ENCODE measurements at regions of chr2 and their contacts with region 1.

Region 1: DNA sequence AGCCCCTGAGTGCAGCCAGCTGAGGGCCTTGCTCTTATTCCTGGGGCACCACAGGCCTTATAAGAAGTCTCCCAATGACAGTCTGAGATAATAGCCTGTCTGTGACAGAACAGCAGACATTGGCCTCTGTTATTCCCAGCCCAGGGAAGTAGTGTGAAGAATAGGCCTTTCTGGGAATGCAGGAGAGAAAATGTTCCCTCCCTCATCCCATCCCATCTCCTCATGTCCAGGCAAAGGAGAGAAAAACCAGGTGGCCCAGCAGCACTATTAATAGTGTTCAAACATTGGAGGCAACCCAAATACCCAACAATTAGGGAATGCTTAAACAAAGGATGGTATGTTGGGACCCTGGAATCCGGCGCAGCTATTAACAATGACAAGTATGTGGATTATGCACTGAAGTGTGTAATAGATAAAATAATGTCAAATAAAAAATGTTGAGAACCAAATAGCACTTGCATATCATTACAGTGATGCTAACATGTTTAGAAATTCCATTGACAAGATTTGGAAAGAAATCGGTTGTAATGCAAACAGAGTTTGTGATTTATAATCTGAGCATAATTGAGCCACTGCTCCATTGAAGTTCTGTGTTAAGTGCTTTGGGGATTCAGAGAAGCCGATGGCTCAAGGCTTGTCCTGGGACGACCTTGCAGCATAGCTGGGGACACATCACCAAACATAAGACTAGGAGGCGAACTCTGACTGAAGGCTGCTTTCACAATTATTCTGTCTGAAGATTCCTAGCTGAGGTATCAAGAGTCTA is 69.3 kb downstream of the LBH start:
- DNase-seq: peak; percentile 96
- H3K4me3 ChIP-seq: no peak overlapping the region
- H3K27ac ChIP-seq: peak overlapping the region; percentile 99
- H3K27me3 ChIP-seq: no peaks in the 10 kb centered on the region
- CTCF ChIP-seq: no peak

Region 2: GRCh38 chr2:30252723-30253701 is 47.6 kb before region 1 on chr2:
- CTCF ChIA-PET with region 1: no interaction called
- POLR2A ChIA-PET with region 1: interaction called, 12 read pairs
- DNase-seq: peak; percentile 41
- H3K4me3 ChIP-seq: no peak overlapping the region
- H3K27ac ChIP-seq: peak overlapping the region; percentile 47
- H3K27me3 ChIP-seq: no peaks in the 10 kb centered on the region
- CTCF ChIP-seq: no peak

Region 3: DNA sequence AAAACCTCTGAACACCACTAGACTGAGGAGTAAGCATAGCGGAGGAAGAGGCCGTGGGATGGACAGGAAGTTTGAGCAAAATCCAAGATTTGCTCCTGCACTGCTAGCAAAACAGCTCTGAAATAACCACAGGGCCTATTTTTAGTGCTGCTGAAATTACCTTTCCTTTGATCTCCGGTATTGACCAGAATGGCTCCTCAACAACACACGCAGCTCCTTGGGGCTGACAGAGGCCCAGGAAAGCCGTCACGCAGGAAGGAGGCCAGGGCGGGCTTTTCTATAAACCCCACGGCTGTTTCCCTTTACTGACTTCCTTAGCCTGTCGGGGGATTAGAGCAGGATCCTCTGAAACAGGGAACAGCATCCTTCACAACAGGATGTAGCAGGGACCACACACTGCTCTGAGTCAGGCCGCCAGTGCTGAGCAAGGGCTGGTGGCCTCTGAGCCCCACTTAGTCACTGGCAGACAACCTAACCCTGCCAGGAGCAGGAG is 65.6 kb after region 1 on chr2:
- CTCF ChIA-PET with region 1: no interaction called
- POLR2A ChIA-PET with region 1: interaction called, 19 read pairs
- DNase-seq: no peak
- H3K4me3 ChIP-seq: no peak overlapping the region
- H3K27ac ChIP-seq: peak overlapping the region; percentile 77
- H3K27me3 ChIP-seq: no peaks in the 10 kb centered on the region
- CTCF ChIP-seq: no peak

Region 4: DNA sequence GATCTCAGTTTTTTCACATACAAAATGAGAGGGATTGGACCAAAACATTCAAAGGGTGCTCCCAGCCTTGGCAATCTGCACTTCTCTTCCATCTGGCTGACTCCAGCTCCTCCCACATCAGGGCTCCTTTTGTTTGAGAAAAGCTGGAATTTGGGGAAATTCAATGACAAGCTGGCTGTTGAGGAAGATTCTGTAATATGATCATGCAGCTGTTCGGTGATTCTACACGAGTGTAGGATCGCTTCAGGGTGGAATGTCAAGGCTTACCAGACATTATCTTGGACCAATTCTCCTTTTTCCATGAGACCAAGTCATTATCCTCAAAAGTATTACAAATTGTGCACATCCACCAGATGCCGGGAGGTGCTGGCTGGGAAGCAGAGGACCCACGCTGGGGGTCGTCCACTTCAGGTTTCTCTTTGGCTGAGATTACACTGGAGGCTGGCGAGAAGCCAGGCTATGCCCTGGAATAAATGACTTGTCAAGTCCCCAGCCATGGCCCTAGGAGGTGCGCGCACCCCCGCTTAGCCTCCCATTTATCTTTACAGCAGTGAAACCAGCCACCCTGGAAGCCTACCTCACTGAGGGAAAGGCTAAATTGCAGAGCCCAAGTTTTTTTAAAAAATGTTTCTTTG is 103.8 kb after region 1 on chr2:
- CTCF ChIA-PET with region 1: no interaction called
- POLR2A ChIA-PET with region 1: interaction called, 11 read pairs
- DNase-seq: no peak
- H3K4me3 ChIP-seq: no peak overlapping the region
- H3K27ac ChIP-seq: peak overlapping the region; percentile 77
- H3K27me3 ChIP-seq: no peaks in the 10 kb centered on the region
- CTCF ChIP-seq: no peak

Region 5: GRCh38 chr2:30421604-30422443 is 121.2 kb after region 1 on chr2:
- CTCF ChIA-PET with region 1: interaction called, 3 read pairs
- POLR2A ChIA-PET with region 1: interaction called, 15 read pairs
- DNase-seq: no peak
- H3K4me3 ChIP-seq: peak overlapping the region; percentile 23; the same call in 1 of the 2 replicates
- H3K27ac ChIP-seq: peak overlapping the region; percentile 92
- H3K27me3 ChIP-seq: no peaks in the 10 kb centered on the region
- CTCF ChIP-seq: no peak

Region 6: GRCh38 chr2:30666307-30666874 is 365.8 kb after region 1 on chr2:
- CTCF ChIA-PET with region 1: no interaction called
- POLR2A ChIA-PET with region 1: interaction called, 17 read pairs
- DNase-seq: peak; percentile 96
- H3K4me3 ChIP-seq: no peak overlapping the region
- H3K27ac ChIP-seq: peak overlapping the region; percentile 100
- H3K27me3 ChIP-seq: no peaks in the 10 kb centered on the region
- CTCF ChIP-seq: no peak

Measured in AG04450 (cell line).